Activated CD8-positive, alpha-beta T cell treated with anti-CD3 and anti-CD28 coated beads for 36 hours (primary cell): ENCODE measurements at regions of chr14 and their contacts with region 1.

Region 1: DNA sequence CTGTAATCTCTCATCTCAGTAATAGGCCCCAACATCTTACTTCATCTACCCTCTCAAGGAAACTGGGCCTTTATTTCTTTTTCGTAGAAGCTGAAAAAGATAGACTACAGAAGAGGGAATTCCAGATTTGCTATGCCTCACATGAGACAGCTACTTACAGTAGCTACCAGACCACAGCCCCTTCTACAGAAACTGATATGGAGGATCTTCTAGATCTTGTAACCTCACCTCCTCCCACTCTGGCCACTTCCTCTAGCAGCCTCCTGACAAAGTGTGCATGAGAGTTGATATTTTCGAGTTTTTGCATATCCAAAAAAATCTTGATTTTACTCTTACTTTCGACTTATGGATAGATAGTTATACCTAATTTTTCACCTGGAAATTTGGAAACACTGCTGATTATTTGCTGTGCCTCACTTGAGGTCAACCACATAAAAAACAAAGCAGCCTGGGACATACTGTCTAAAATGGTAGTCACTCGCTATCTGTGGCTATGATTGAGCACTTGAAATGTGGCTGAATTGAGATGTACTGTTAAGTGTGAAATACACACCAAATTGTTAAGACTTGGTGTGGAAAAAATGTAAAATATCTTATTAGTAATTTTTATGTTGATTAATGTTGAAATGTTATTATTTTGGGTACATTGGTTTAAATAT is 86.3 kb upstream of the NID2 start:
- DNase-seq: peak; percentile 70
- ATAC-seq: peak; percentile 93
- H3K4me3 Mint-ChIP-seq: no peak overlapping the region
- H3K27ac Mint-ChIP-seq: peak overlapping the region; percentile 73
- H3K4me1 Mint-ChIP-seq: peaks cover 42% of the 10 kb centered on the region
- H3K27me3 Mint-ChIP-seq: no peaks in the 10 kb centered on the region
- CTCF ChIP-seq: no peak

Region 2: DNA sequence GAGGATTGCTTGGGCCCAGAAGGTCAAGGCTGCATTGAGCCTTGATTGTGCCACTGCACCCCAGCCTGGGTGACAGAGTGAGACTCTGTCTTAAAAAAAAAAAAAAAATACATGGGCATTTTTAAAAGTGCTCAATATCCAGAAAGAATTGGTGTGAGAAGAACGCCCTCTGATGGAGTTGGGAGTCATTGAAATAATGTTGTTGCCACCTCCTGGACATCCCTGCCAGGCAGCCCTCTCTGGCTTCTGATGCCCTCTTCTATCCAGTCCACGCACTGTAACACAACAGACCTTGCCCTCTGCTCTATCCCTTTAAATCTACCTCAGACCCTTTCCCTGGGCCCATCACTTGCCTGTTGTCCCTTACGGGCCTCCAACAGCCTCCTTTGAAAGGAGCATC is 117.3 kb after region 1 on chr14:
- CTCF ChIA-PET with region 1: no interaction called
- POLR2A ChIA-PET with region 1: no interaction called
- intact Hi-C with region 1: loop called (anchors 10 kb)
- DNase-seq: peak; percentile 52
- ATAC-seq: peak; percentile 53
- H3K4me3 Mint-ChIP-seq: no peak overlapping the region
- H3K27ac Mint-ChIP-seq: peak overlapping the region; percentile 52
- H3K4me1 Mint-ChIP-seq: peaks cover 21% of the 10 kb centered on the region
- H3K27me3 Mint-ChIP-seq: peaks cover 19% of the 10 kb centered on the region
- CTCF ChIP-seq: peak; percentile 49